ENCODE measurements at regions of chr6 and their contacts with region 1.

Region 1: DNA sequence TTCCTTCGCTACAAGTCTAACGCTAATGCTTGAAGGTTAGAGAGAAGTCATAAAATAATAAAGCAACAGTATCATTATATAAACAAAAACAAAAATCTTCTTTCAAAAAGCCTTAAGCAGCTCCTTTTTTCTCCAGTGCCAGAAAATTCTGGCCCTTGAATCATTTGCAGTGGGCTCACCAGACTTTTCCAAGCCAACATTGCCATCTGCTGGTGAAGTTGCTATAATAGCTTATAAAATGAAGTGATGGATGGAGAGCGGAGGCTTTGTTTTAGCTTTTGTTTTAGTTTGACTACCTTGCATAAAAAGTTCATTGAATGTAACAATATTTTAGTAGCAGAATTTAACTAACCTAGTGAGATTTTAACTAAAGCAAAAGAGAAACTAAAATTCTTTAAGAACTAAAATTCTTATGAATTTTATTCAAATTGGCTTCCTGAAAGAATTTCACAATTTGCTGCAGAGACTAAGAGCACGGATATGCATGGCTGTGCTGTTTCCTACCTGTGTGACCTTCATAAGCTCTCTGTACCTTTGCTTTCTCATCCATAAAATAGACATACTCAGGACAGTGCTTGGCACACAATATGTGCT is 44.8 kb upstream of the SLC2A12 start:
- DNase-seq: peak in 8 of 10 donors; percentile 47 to 74 (median 64)
- H3K4me3 ChIP-seq: peak overlapping the region in 2 of 59 donors; percentile 0 to 17
- H3K27ac ChIP-seq: peak overlapping the region in 5 of 59 donors; percentile 3 to 28 (median 16)
- H3K27me3 ChIP-seq: no peaks in the 10 kb centered on the region
- CTCF ChIP-seq: peak; percentile 70 to 99 (median 88)

Region 2: DNA sequence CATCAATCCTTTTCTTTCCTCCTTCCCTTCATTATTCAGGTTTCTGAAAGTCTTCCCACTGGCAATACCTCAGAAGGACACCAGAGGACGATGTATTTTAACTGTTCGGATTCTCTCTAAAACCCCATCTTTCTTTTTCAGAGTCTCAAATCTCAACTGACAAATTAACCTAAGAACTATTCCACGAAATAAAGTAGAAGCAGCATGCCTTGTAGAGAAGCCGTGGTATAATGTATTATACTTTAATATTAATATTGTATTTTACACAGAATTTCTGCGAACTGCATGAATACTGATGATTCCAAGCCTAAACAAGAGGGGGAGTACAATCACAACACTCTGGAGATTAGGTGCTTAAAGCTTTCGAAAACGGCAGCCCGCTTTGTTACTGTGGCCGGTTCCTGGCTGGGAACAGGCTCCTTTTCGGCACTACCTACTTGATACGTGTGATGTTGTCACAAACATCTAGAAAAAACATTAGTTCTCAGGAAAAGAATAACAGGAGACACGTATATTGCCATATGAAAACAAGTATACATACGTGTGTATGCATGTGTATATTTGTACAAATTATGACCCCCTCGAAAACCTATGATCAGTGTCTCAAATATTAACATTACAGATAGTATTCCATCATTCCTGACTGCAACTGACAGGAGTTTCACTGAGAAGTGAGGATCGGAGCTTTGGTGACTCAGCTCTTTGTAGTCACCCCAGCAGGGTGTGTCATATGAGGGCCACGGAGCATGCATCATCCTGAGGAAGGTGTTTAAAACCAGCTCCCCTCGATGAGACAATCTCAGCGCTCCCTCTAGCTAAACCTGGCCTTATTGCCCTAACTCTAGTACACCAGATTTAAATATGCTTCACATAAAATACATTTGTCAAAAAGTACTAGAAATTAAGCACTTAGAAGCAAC is 528.0 kb before region 1 on chr6:
- intact Hi-C with region 1: loop called (anchors 10 kb)
- DNase-seq: peak in 3 of 10 donors; percentile 31 to 54 (median 38)
- H3K4me3 ChIP-seq: peak overlapping the region; percentile 25 to 72 (median 51)
- H3K27ac ChIP-seq: no peak overlapping the region
- H3K27me3 ChIP-seq: peaks cover 0 to 10% (median 0%) of the 10 kb centered on the region in 45 donors
- CTCF ChIP-seq: peak; percentile 70 to 96 (median 88)

Region 3: GRCh38 chr6:133973109-133973971 is 123.9 kb before region 1 on chr6:
- intact Hi-C with region 1: loop called in 1 of 2 experiments (anchors 10 kb)
- DNase-seq: no peak
- H3K4me3 ChIP-seq: no peak overlapping the region
- H3K27ac ChIP-seq: peak overlapping the region in 51 of 59 donors; percentile 3 to 81 (median 60)
- H3K27me3 ChIP-seq: no peaks in the 10 kb centered on the region
- CTCF ChIP-seq: peak; percentile 73 to 97 (median 87)

Region 4: DNA sequence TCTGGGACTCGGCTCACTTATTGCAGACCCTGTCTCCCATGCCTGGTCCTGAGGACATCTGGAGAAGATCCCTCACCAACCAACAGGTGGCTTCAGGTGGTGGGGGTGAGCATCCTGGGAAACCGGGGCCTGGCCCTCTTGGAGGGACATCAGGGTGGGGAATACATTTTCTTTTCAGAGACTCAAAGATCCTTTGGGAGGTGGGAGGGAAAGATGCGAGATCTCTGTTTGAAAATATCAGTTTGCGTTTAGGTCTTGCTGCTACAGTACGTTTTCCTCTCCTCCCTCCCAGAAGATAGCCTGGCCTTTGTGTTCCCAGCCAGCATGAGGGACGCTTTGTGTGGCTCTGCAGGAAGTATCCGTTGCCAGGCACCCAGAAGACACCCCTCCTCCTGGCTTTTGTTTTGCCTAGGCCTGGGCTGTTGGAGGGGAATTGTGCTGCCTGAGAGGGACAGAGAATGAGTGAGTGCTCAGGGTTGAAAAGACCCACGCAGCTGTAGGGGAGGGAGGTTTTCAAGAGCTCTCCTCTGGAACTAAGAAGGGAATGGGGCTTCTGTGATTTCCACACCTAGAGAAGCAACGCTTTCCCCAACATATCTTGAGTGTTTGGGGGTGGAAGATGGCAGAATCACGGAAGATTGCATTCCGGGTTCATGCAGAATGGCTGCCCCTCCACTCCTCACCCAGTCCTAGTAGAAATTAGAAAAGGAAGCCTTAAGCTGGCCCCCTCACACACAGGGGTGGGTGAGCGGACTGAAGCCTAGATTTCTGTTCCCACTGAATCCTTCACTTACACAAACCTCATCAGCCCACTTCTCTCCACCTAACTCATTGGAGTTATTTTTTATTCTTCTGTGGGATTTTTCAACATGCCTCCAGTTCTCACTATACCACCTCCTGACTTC is 22.8 kb before region 1 on chr6:
- intact Hi-C with region 1: loop called in 1 of 2 experiments (anchors 2 kb)
- DNase-seq: peak in 9 of 10 donors; percentile 68 to 90 (median 85)
- H3K4me3 ChIP-seq: peak overlapping the region in 53 of 59 donors; percentile 2 to 69 (median 41)
- H3K27ac ChIP-seq: peak overlapping the region; percentile 58 to 99 (median 94)
- H3K27me3 ChIP-seq: no peaks in the 10 kb centered on the region
- CTCF ChIP-seq: peak in 22 of 56 donors; percentile 3 to 53 (median 20)

Region 5: GRCh38 chr6:135451693-135452092 is 1354.5 kb after region 1 on chr6:
- intact Hi-C with region 1: no loop called
- DNase-seq: no peak
- H3K4me3 ChIP-seq: no peak overlapping the region
- H3K27ac ChIP-seq: no peak overlapping the region
- H3K27me3 ChIP-seq: no peaks in the 10 kb centered on the region
- CTCF ChIP-seq: peak; percentile 52 to 89 (median 76)

Measured in dorsolateral prefrontal cortex (tissue), 120 donors.